Activated CD8-positive, alpha-beta memory T cell treated with anti-CD3 and anti-CD28 coated beads, Interleukin-2, amount 10 ng/mL, durations not matched to agents 7 days and 5 days (primary cell): ENCODE measurements at regions of chr16 and their contacts with region 1.

Region 1: DNA sequence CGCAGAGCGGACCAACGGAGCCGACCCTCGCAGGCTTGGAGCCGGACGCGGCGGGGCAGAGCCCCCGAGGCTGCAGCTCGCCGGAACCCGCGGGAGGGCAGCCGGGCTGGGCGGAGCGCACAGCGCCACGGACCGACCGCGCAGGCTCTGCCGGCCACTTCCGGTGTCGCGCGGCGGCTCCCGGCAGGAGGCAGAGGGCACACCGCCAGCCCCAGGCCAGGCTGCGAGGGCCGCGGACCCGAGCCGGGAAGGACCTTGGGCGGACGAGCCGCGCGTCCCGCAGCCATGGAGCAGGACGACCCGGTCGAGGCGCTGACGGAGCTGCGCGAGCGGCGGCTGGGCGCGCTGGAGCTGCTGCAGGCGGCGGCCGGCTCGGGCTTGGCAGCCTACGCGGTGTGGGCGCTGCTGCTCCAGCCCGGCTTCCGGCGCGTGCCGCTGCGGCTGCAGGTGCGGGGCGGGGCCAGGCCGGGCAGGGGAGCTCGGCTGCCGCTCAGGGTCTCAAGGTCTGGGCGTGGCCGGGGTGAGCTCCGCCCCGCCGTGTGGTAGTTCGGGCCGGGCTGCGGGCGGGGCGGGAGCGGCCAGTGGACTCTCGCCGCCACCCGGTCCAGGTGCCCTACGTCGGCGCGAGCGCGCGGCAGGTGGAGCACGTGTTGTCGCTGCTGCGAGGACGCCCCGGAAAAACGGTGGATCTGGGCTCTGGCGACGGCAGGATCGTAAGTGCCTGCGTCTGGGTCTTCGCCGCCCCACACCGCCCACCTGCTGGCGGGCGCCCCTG is at the start of gene ANTKMT:
- DNase-seq: peak; percentile 83
- ATAC-seq: peak; percentile 72
- H3K4me3 Mint-ChIP-seq: peak within 1 kb of the TSS; percentile 69
- H3K27ac Mint-ChIP-seq: peak within 1 kb of the TSS; percentile 72
- H3K4me1 Mint-ChIP-seq: peaks cover 23% of the 10 kb centered on the region
- H3K27me3 Mint-ChIP-seq: peaks cover 4% of the 10 kb centered on the region
- total RNA-seq, gene ANTKMT: 14.8 to 21.1 TPM

Region 2: GRCh38 chr16:483341-484075 is 237.7 kb before region 1 on chr16:
- CTCF ChIA-PET with region 1: no interaction called
- DNase-seq: no peak
- ATAC-seq: no peak
- H3K4me3 Mint-ChIP-seq: no peak overlapping the region
- H3K27ac Mint-ChIP-seq: no peak overlapping the region
- H3K4me1 Mint-ChIP-seq: no peaks in the 10 kb centered on the region
- H3K27me3 Mint-ChIP-seq: no peaks in the 10 kb centered on the region

Region 3: GRCh38 chr16:733382-734207 is 12.4 kb after region 1 on chr16:
- CTCF ChIA-PET with region 1: interaction called, 33 read pairs
- DNase-seq: peak; percentile 45
- ATAC-seq: no peak
- H3K4me3 Mint-ChIP-seq: no peak overlapping the region
- H3K27ac Mint-ChIP-seq: no peak overlapping the region
- H3K4me1 Mint-ChIP-seq: peaks cover 36% of the 10 kb centered on the region
- H3K27me3 Mint-ChIP-seq: no peaks in the 10 kb centered on the region